ENCODE measurements at regions of chrX and their contacts with region 1.

Region 1: GRCh38 chrX:79366873-79367749 is at the start of gene ITM2A:
- DNase-seq: peak; percentile 0
- H3K4me3 ChIP-seq: peak within 1 kb of the TSS in 2 of 3 experiments; percentile 12 to 23
- H3K27ac ChIP-seq: no peak within 1 kb of the TSS
- H3K4me1 ChIP-seq: no peaks in the 10 kb centered on the region
- H3K27me3 ChIP-seq: no peaks in the 10 kb centered on the region
- CTCF ChIP-seq: no peak
- POLR2A ChIP-seq: no peak
- total RNA-seq, gene ITM2A: 3.9 and 5.6 TPM in 2 replicates

Region 2: DNA sequence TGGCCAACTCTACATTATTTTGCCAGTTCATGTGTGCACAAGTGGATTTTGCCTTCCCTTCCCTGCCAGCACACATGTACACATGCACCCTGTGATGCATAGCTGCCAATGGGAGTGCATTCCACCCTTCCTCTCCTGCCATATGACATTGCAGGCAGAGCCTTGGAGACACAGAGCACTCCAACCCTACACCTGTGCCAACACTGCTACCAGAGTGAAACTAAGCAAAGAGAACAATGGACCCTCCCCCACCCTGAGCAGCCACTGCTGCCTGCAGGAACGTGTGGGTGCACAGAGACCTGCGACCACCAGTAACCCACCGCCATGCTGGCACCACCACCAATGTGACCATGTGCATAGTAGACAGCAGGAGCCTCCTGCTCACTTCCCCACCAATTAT is 78.4 kb before region 1 on chrX:
- CTCF ChIA-PET with region 1: no interaction called
- POLR2A ChIA-PET with region 1: no interaction called
- dilution Hi-C with region 1: no loop called
- intact Hi-C with region 1: no loop called
- DNase-seq: no peak
- H3K4me3 ChIP-seq: no peak overlapping the region
- H3K27ac ChIP-seq: no peak overlapping the region
- H3K4me1 ChIP-seq: no peaks in the 10 kb centered on the region
- H3K27me3 ChIP-seq: no peaks in the 10 kb centered on the region
- CTCF ChIP-seq: no peak
- POLR2A ChIP-seq: no peak

Region 3: DNA sequence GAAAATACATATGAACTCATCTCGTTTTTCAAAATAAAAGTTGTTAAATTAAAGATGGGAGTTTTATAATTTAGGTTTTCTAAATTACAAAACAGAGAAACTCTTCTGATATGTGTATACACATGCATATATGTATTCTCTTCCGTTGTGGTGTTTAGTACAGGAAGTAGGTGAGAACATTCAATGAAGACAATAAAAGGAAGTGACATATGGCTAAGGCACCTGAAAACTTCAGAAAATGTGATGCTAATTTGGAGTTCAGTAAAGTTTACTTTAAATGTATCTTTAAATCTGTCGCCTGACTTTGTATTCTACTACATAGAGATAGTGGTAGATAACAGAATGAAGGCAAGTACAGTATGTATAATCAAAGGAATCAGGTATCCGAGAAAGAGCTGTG is 33.5 kb after region 1 on chrX:
- CTCF ChIA-PET with region 1: no interaction called
- POLR2A ChIA-PET with region 1: no interaction called
- dilution Hi-C with region 1: no loop called
- intact Hi-C with region 1: loop called (anchors 1 kb)
- DNase-seq: no peak
- H3K4me3 ChIP-seq: no peak overlapping the region
- H3K27ac ChIP-seq: no peak overlapping the region
- H3K4me1 ChIP-seq: no peaks in the 10 kb centered on the region
- H3K27me3 ChIP-seq: no peaks in the 10 kb centered on the region
- CTCF ChIP-seq: no peak
- POLR2A ChIP-seq: no peak

Region 4: DNA sequence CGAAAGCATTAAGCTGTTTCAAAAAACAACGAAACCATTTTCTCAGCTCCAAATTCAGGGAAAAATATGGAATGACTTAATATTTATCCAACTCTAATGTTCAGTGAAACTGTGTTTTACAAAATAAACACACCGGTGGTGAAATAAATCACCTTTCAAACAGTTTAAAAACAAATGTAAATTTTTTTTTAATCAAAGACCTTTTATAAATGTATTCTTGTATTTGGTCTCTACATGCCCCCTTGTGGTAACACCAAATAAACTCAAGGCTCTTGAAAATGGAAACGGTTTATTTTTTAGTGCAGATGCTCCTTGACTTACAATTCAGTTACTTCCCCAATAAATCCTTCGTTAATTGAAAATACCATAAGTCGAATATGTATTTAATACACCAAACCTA is 45.9 kb after region 1 on chrX:
- CTCF ChIA-PET with region 1: no interaction called
- POLR2A ChIA-PET with region 1: no interaction called
- dilution Hi-C with region 1: no loop called
- intact Hi-C with region 1: loop called (anchors 5 kb)
- DNase-seq: peak; percentile 1
- H3K4me3 ChIP-seq: no peak overlapping the region
- H3K27ac ChIP-seq: no peak overlapping the region
- H3K4me1 ChIP-seq: no peaks in the 10 kb centered on the region
- H3K27me3 ChIP-seq: no peaks in the 10 kb centered on the region
- CTCF ChIP-seq: peak in 1 of 2 donors; percentile 6
- POLR2A ChIP-seq: no peak